ENCODE measurements at regions of chr16 and their contacts with region 1.

Region 1: DNA sequence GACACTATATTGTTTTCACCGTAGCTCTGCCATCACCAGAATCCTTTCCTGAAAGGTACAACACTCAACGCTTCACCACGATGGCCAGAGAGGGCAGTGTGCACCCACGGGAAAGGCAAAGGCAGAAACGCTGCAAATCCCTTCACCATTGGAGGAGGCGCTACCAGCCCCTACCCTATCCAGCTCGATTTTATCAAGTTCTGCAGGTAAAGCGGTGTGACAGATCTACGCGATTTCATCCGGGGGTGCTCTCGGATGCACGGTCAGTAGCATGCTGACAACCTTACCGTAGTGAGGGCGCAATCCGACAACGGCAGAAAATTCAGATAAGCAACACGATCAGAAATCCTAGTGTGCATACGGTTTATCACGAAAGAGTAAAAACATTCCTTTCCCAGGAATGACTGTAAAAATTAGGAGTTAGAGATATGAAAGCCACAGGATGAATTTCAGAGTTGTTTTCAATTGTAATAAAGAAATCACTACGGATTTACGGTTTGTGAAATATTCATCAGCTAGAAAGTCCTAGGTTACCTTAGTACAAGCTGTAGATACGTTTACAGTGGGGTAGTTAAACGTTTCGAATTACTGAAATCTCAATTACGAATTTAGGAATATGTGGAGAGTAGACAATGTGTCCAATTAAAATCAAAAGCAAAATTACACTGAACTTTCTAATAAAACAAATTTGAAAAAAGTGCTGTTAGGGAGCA is 1.8 kb downstream of the NETO2 start:
- DNase-seq: peak; percentile 92
- ATAC-seq: peak; percentile 76
- H3K4me3 Mint-ChIP-seq: peak overlapping the region; percentile 75
- H3K27ac Mint-ChIP-seq: peak overlapping the region; percentile 14; the same call in 1 of the 2 replicates
- H3K4me1 Mint-ChIP-seq: peaks cover 27% of the 10 kb centered on the region
- H3K27me3 Mint-ChIP-seq: peaks cover 35% of the 10 kb centered on the region
- CTCF ChIP-seq: peak; percentile 51; the same call in 1 of the 2 replicates

Region 2: GRCh38 chr16:47037746-47038458 is 104.0 kb before region 1 on chr16:
- CTCF ChIA-PET with region 1: interaction called, 24 read pairs
- POLR2A ChIA-PET with region 1: interaction called, 3 read pairs
- DNase-seq: peak; percentile 89
- ATAC-seq: peak; percentile 92
- H3K4me3 Mint-ChIP-seq: peak overlapping the region; percentile 77
- H3K27ac Mint-ChIP-seq: no peak overlapping the region
- H3K4me1 Mint-ChIP-seq: no peaks in the 10 kb centered on the region; the same call in 1 of the 2 replicates
- H3K27me3 Mint-ChIP-seq: peaks cover 29% of the 10 kb centered on the region
- CTCF ChIP-seq: peak; percentile 92

Region 3: GRCh38 chr16:47162670-47163420 is 20.9 kb after region 1 on chr16:
- CTCF ChIA-PET with region 1: interaction called, 31 read pairs
- POLR2A ChIA-PET with region 1: no interaction called
- DNase-seq: no peak
- ATAC-seq: peak; percentile 51; the same call in 1 of the 2 replicates
- H3K4me3 Mint-ChIP-seq: no peak overlapping the region
- H3K27ac Mint-ChIP-seq: no peak overlapping the region
- H3K4me1 Mint-ChIP-seq: peaks cover 30% of the 10 kb centered on the region
- H3K27me3 Mint-ChIP-seq: no peaks in the 10 kb centered on the region
- CTCF ChIP-seq: no peak

Region 4: DNA sequence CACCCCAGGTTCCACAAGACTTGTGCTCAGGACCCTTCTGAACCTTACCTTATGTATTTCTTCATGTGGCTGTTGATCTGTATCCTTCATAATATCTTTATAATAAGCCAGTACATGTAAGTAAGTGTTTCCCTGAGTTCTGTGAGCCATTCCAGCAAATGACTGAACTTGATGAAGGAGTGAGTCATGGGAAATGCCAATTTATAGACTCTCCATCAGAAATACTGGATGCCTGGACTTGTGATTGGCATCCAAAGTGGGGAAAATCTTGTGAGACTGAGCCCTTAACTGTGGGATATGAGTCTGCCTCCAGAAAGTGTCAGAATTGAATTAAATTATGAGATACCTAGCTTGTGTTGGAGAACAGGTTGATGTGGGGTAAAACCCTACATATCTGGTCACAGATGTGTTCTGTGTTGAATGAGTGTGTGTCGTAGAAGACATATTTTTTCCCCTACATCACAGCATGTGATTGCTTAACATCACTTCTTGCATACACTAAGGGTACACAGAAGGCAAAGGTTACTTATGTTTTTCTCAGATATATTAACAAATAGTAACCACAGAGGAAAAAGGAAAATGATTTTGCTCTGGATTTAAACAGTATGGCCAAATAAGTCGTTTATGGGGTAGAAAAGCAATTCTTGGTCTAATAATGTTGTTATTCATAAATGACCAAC is 72.0 kb after region 1 on chr16:
- CTCF ChIA-PET with region 1: no interaction called
- POLR2A ChIA-PET with region 1: no interaction called
- DNase-seq: no peak
- ATAC-seq: no peak
- H3K4me3 Mint-ChIP-seq: no peak overlapping the region
- H3K27ac Mint-ChIP-seq: no peak overlapping the region
- H3K4me1 Mint-ChIP-seq: no peaks in the 10 kb centered on the region
- H3K27me3 Mint-ChIP-seq: no peaks in the 10 kb centered on the region
- CTCF ChIP-seq: no peak

Region 5: GRCh38 chr16:48054881-48055601 is 913.1 kb after region 1 on chr16:
- CTCF ChIA-PET with region 1: interaction called, 13 read pairs
- POLR2A ChIA-PET with region 1: no interaction called
- DNase-seq: peak; percentile 66
- ATAC-seq: peak; percentile 87
- H3K4me3 Mint-ChIP-seq: peak overlapping the region; percentile 47
- H3K27ac Mint-ChIP-seq: no peak overlapping the region; the same call in 1 of the 2 replicates
- H3K4me1 Mint-ChIP-seq: peaks cover 45% of the 10 kb centered on the region
- H3K27me3 Mint-ChIP-seq: peaks cover 3% of the 10 kb centered on the region; the same call in 1 of the 2 replicates
- CTCF ChIP-seq: peak; percentile 64

Region 6: DNA sequence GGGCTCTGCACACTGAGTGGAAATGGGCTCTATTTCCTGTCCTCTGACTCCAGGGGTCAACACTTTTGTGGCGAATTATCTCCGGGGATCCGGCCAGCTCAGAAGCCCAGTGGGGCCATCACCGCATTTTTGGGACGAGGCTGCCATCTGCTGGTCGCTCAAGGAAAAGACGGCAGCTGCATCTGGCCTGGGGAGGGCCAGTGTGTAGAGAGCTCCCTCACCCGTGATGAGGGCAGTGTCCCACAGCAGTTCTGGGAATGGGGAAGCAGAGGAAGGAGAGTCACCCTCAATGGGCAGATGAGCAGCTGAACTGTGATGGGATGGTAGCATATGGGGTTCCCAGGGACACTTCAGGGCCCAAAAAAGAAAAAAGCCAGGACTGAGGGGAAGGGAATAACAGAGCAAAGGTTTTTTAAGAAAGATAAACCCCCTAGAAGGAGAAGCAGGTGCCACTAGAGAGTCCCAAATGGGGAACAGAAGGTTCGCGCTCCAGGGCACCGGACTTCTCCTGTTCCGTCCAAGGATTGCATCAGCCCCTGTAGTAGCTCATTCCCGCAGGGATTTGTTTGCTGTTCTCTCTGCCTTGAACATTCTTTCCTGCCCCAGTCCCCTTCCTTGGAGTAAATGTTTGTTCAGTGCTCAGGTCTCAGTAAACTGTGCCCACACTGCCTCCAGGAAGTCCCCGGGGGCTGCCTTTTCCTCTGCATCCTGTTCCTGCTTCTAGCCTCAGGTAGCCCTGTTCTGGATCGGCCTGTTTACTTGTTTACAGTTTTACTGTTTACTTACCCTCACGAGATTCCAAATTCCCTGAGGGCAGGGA is 1023.2 kb after region 1 on chr16:
- CTCF ChIA-PET with region 1: interaction called, 31 read pairs
- POLR2A ChIA-PET with region 1: no interaction called
- DNase-seq: peak; percentile 86
- ATAC-seq: peak; percentile 95
- H3K4me3 Mint-ChIP-seq: no peak overlapping the region; the same call in 1 of the 2 replicates
- H3K27ac Mint-ChIP-seq: peak overlapping the region; percentile 91; the same call in 1 of the 2 replicates
- H3K4me1 Mint-ChIP-seq: peaks cover 26% of the 10 kb centered on the region
- H3K27me3 Mint-ChIP-seq: no peaks in the 10 kb centered on the region
- CTCF ChIP-seq: peak; percentile 81